Gastrocnemius medialis (tissue), 4 donors: ENCODE measurements at regions of chr7 and their contacts with region 1.

Region 1: GRCh38 chr7:4744391-4745264 is 30.8 kb upstream of the AP5Z1 start:
- DNase-seq: peak; percentile 98 to 99
- ATAC-seq: peak; percentile 91 to 93
- H3K4me3 ChIP-seq: peak overlapping the region; percentile 34 to 46 (median 38)
- H3K27ac ChIP-seq: peak overlapping the region; percentile 88 to 94 (median 92)
- H3K4me1 ChIP-seq: peaks cover 31 to 44% of the 10 kb centered on the region in 2 donors
- H3K27me3 ChIP-seq: no peaks in the 10 kb centered on the region
- CTCF ChIP-seq: peak in 1 of 5 experiments; percentile 17
- POLR2A ChIP-seq: peak; percentile 53 to 79

Region 2: GRCh38 chr7:4641667-4642467 is 102.8 kb before region 1 on chr7:
- in situ Hi-C with region 1: no loop called
- intact Hi-C with region 1: no loop called
- DNase-seq: peak; percentile 82 to 91
- ATAC-seq: peak; percentile 93 to 94
- H3K4me3 ChIP-seq: peak overlapping the region; percentile 63 to 90 (median 76)
- H3K27ac ChIP-seq: peak overlapping the region; percentile 79 to 92 (median 85)
- H3K4me1 ChIP-seq: peaks cover 0 to 4% of the 10 kb centered on the region in 2 donors
- H3K27me3 ChIP-seq: no peaks in the 10 kb centered on the region
- CTCF ChIP-seq: peak in 4 of 5 experiments; percentile 28 to 66 (median 60)
- POLR2A ChIP-seq: peak; percentile 55 to 57

Region 3: GRCh38 chr7:4689668-4690067 is 55.0 kb before region 1 on chr7:
- in situ Hi-C with region 1: loop called in 3 of 4 experiments (anchors 5 to 10 kb)
- intact Hi-C with region 1: loop called (anchors 1 kb)
- DNase-seq: no peak
- ATAC-seq: no peak
- H3K4me3 ChIP-seq: no peak overlapping the region
- H3K27ac ChIP-seq: peak overlapping the region in 3 of 4 donors; percentile 19 to 39 (median 30)
- H3K4me1 ChIP-seq: peaks cover 62 to 80% of the 10 kb centered on the region in 2 donors
- H3K27me3 ChIP-seq: no peaks in the 10 kb centered on the region
- CTCF ChIP-seq: no peak
- POLR2A ChIP-seq: no peak

Region 4: GRCh38 chr7:4775250-4775847 is 30.7 kb after region 1 on chr7 and contains the start of gene AP5Z1:
- in situ Hi-C with region 1: no loop called
- intact Hi-C with region 1: loop called (anchors 2 kb)
- DNase-seq: peak; percentile 95
- ATAC-seq: peak; percentile 92 to 96
- H3K4me3 ChIP-seq: peak within 1 kb of the TSS; percentile 95 to 99 (median 98)
- H3K27ac ChIP-seq: peak within 1 kb of the TSS; percentile 91 to 98 (median 92)
- H3K4me1 ChIP-seq: peaks cover 14 to 22% of the 10 kb centered on the region in 2 donors
- H3K27me3 ChIP-seq: no peaks in the 10 kb centered on the region
- CTCF ChIP-seq: no peak
- POLR2A ChIP-seq: peak; percentile 81 to 89
- total RNA-seq, gene AP5Z1: 10.2 to 18.1 (median 14.6) TPM

Region 5: GRCh38 chr7:4919969-4920766 is 175.5 kb after region 1 on chr7:
- in situ Hi-C with region 1: no loop called
- intact Hi-C with region 1: no loop called
- DNase-seq: no peak
- ATAC-seq: no peak
- H3K4me3 ChIP-seq: no peak overlapping the region
- H3K27ac ChIP-seq: no peak overlapping the region
- H3K4me1 ChIP-seq: no peaks in the 10 kb centered on the region
- H3K27me3 ChIP-seq: no peaks in the 10 kb centered on the region
- CTCF ChIP-seq: no peak
- POLR2A ChIP-seq: no peak